CD4-positive, alpha-beta memory T cell (primary cell): ENCODE measurements at regions of chr1 and their contacts with region 1.

Region 1: GRCh38 chr1:20786253-20787028 is 666 bp downstream of the HP1BP3 start:
- DNase-seq: peak; percentile 94 to 99 (median 97)
- H3K4me3 ChIP-seq: peak overlapping the region; percentile 64 to 100
- H3K4me3 Mint-ChIP-seq: peak overlapping the region; percentile 92 to 100 (median 98)
- H3K27ac ChIP-seq: peak overlapping the region; percentile 86
- H3K27ac Mint-ChIP-seq: peak overlapping the region; percentile 97 to 99 (median 97)
- H3K4me1 ChIP-seq: peaks cover 43% of the 10 kb centered on the region
- H3K4me1 Mint-ChIP-seq: peaks cover 25 to 46% (median 35%) of the 10 kb centered on the region in 4 donors
- H3K27me3 ChIP-seq: no peaks in the 10 kb centered on the region
- H3K27me3 Mint-ChIP-seq: peaks cover 0 to 3% of the 10 kb centered on the region in 2 donors

Region 2: GRCh38 chr1:20507564-20508410 is 278.7 kb before region 1 on chr1 and contains the start of gene MUL1:
- CTCF ChIA-PET with region 1: no interaction called
- POLR2A ChIA-PET with region 1: interaction called, 3 read pairs
- intact Hi-C with region 1: loop called (anchors 5 kb)
- DNase-seq: peak; percentile 88 to 93 (median 90)
- H3K4me3 ChIP-seq: peak within 1 kb of the TSS; percentile 84 to 91
- H3K4me3 Mint-ChIP-seq: peak within 1 kb of the TSS; percentile 84 to 95 (median 91)
- H3K27ac ChIP-seq: peak within 1 kb of the TSS; percentile 91
- H3K27ac Mint-ChIP-seq: peak within 1 kb of the TSS; percentile 77 to 99 (median 94)
- H3K4me1 ChIP-seq: peaks cover 30% of the 10 kb centered on the region
- H3K4me1 Mint-ChIP-seq: peaks cover 11 to 31% (median 21%) of the 10 kb centered on the region in 4 donors
- H3K27me3 ChIP-seq: peaks cover 6% of the 10 kb centered on the region
- H3K27me3 Mint-ChIP-seq: peaks cover 0 to 3% of the 10 kb centered on the region in 2 donors
- total RNA-seq, gene MUL1: 21.4 to 22.2 TPM

Region 3: DNA sequence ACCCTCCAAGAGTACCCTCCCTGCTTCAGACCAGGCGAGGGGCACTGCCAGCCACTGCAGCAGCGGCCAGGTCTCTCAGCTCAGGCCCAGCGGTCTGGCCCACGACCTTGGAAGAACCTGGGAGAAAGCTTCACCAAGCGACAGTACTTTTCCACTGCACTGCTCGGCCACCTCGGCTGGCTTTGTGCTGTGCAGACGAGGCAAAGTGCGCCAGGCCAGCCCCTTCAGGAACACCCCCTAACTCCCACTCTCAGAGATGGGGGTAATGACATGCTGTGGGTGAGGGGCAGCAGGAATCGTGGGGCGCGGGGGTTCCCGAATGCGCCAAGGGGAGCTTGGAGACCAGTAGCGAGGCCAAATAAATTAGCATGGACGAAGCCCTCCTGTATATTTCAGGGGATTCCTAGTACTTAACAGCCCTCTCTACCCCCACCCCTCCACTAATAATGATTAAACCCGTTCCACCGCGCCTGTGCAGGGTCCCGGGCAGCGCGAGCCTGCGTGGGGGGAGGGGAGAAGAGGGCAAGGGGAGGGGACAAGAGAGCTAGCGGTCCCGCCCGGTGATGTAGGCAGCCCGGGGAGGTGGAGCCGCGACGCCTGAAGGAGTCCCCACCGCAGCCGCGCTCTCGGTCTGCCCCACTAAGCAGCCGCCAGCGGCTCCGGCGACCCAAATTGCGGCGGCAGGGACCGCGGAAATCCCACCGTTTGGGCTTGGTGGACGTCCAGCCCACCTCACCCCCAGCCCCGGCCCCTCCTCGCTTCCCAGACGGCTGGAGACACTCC is 234.3 kb before region 1 on chr1 and contains the start of gene FAM43B:
- CTCF ChIA-PET with region 1: no interaction called
- POLR2A ChIA-PET with region 1: no interaction called
- intact Hi-C with region 1: no loop called
- DNase-seq: no peak
- H3K4me3 ChIP-seq: no peak within 1 kb of the TSS
- H3K4me3 Mint-ChIP-seq: no peak within 1 kb of the TSS
- H3K27ac ChIP-seq: no peak within 1 kb of the TSS
- H3K27ac Mint-ChIP-seq: no peak within 1 kb of the TSS
- H3K4me1 ChIP-seq: no peaks in the 10 kb centered on the region
- H3K4me1 Mint-ChIP-seq: peaks cover 0 to 2% (median 0%) of the 10 kb centered on the region in 4 donors
- H3K27me3 ChIP-seq: peaks cover 11% of the 10 kb centered on the region
- H3K27me3 Mint-ChIP-seq: peaks cover 18 to 26% of the 10 kb centered on the region in 2 donors
- total RNA-seq, gene FAM43B: not detected

Region 4: DNA sequence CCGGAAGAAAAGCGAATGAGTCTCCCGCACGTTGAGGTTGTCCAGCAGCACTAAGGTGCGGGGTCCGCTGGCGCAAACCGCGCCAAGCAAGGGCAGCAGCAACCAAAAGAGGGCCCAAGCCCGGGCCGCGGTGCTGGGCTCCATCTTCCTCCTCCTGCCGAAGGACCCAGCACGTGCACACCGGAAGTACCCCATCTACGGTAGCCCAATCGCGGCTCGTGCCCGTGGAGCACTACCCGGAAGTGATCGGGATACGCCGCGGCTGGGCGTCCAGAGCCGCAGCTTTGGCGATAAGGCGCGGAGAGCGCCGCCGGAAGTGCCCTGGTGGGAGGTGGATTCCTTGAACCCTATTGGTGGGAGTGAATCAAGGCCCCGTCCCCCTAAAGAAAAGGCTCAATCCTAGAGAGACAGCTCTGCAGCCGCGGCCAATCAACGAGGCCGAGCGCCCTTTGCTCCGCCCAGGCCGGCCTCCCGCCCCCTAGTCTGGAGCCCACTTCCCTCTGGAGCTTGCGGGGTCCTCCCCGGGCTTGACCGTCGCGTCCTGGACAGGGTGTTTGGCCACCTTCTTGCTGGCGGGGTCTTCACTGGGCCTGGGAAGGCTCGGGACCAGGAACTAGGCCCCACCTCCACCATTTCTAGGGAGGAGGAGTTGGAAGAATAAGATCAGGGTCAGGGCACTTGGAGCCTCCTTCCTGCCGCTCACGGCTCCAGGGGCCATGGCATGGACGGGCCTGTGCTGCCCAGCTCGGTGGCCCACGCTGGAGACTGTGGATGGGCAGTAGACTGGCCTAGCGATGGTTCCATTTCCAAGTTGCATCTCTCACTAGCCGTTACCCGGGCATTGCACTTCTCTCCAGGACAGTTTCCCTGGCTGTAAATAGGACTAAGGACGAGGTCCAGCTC is 125.0 kb before region 1 on chr1 and contains the start of gene DDOST:
- CTCF ChIA-PET with region 1: no interaction called
- POLR2A ChIA-PET with region 1: interaction called, 15 read pairs
- intact Hi-C with region 1: no loop called
- DNase-seq: peak; percentile 93 to 97 (median 95)
- H3K4me3 ChIP-seq: peak within 1 kb of the TSS; percentile 86 to 98
- H3K4me3 Mint-ChIP-seq: peak within 1 kb of the TSS; percentile 96 to 100 (median 98)
- H3K27ac ChIP-seq: peak within 1 kb of the TSS; percentile 74
- H3K27ac Mint-ChIP-seq: peak within 1 kb of the TSS; percentile 96 to 99 (median 98)
- H3K4me1 ChIP-seq: peaks cover 37% of the 10 kb centered on the region
- H3K4me1 Mint-ChIP-seq: peaks cover 31 to 62% (median 44%) of the 10 kb centered on the region in 4 donors
- H3K27me3 ChIP-seq: no peaks in the 10 kb centered on the region
- H3K27me3 Mint-ChIP-seq: no peaks in the 10 kb centered on the region
- total RNA-seq, gene DDOST: 133 to 134 TPM

Region 5: GRCh38 chr1:20742671-20743070 is 43.8 kb before region 1 on chr1:
- CTCF ChIA-PET with region 1: no interaction called
- POLR2A ChIA-PET with region 1: no interaction called
- intact Hi-C with region 1: loop called (anchors 5 kb)
- DNase-seq: no peak
- H3K4me3 ChIP-seq: no peak overlapping the region
- H3K4me3 Mint-ChIP-seq: no peak overlapping the region
- H3K27ac ChIP-seq: no peak overlapping the region
- H3K27ac Mint-ChIP-seq: no peak overlapping the region
- H3K4me1 ChIP-seq: no peaks in the 10 kb centered on the region
- H3K4me1 Mint-ChIP-seq: no peaks in the 10 kb centered on the region
- H3K27me3 ChIP-seq: no peaks in the 10 kb centered on the region
- H3K27me3 Mint-ChIP-seq: no peaks in the 10 kb centered on the region

Region 6: DNA sequence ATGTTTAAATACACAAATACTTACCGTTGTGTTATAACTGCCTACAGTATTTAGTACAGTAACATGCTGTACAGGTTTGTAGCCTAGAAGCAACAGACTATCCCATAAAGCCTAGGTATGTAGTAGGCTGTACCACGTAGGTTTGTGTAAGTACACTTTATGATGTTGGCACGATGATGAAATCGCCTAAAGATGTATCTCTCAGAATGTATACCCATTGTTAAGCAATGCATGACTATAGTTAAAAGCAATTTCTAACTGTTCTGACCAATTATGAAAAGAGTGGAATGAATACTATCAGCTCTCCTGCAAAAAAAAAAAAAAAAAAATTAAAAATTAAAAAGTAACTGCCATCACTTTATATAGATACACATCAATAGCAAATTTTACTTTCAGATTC is 10.7 kb before region 1 on chr1:
- CTCF ChIA-PET with region 1: interaction called, 4 read pairs
- POLR2A ChIA-PET with region 1: interaction called, 20 read pairs
- intact Hi-C with region 1: no loop called
- DNase-seq: no peak
- H3K4me3 ChIP-seq: no peak overlapping the region
- H3K4me3 Mint-ChIP-seq: no peak overlapping the region
- H3K27ac ChIP-seq: no peak overlapping the region
- H3K27ac Mint-ChIP-seq: no peak overlapping the region
- H3K4me1 ChIP-seq: peaks cover 13% of the 10 kb centered on the region
- H3K4me1 Mint-ChIP-seq: peaks cover 18 to 37% (median 29%) of the 10 kb centered on the region in 4 donors
- H3K27me3 ChIP-seq: no peaks in the 10 kb centered on the region
- H3K27me3 Mint-ChIP-seq: no peaks in the 10 kb centered on the region

Region 7: DNA sequence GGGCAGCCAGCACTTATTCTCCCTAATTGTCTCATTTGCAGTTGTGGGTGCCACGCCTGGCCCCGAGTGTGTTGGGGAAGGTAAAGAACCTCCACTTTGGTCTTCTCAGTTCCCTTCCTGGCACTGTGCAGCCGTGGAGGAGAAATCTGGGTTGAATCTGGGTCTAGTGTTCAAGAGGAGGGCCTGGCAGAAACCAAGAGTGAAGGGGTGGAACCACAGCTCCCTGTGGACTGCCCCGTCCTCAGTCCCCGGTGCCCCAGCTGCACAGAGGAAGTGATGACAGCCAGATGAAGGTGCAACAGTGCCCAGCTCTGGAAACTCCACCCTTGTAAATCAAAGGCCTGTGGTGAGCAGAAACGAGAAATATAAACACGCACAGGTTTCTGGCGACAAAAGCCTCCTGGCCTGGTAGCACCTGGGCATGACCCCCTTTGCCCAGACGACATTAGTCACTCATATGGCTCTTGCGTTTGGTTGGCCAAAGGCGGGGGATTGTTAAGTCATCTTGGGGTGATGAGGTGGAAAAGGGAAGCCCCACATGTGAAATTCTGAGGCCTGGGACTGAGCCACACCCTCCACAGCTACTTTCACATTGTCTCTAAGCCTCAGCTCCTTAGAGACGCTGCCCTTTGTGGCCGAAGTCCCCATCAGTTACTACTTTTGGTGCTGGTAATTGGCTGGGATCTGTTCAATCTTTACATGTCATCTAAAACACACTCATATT is 508.0 kb after region 1 on chr1:
- CTCF ChIA-PET with region 1: no interaction called
- POLR2A ChIA-PET with region 1: interaction called, 9 read pairs
- intact Hi-C with region 1: loop called (anchors 5 kb)
- DNase-seq: peak; percentile 93 to 99 (median 97)
- H3K4me3 ChIP-seq: peak overlapping the region; percentile 79 to 81
- H3K4me3 Mint-ChIP-seq: peak overlapping the region; percentile 86 to 99 (median 94)
- H3K27ac ChIP-seq: peak overlapping the region; percentile 99
- H3K27ac Mint-ChIP-seq: peak overlapping the region; percentile 96 to 100 (median 99)
- H3K4me1 ChIP-seq: peaks cover 84% of the 10 kb centered on the region
- H3K4me1 Mint-ChIP-seq: peaks cover 42 to 95% (median 69%) of the 10 kb centered on the region in 4 donors
- H3K27me3 ChIP-seq: no peaks in the 10 kb centered on the region
- H3K27me3 Mint-ChIP-seq: no peaks in the 10 kb centered on the region